ENCODE measurements at regions of chr6 and their contacts with region 1.

Region 1: DNA sequence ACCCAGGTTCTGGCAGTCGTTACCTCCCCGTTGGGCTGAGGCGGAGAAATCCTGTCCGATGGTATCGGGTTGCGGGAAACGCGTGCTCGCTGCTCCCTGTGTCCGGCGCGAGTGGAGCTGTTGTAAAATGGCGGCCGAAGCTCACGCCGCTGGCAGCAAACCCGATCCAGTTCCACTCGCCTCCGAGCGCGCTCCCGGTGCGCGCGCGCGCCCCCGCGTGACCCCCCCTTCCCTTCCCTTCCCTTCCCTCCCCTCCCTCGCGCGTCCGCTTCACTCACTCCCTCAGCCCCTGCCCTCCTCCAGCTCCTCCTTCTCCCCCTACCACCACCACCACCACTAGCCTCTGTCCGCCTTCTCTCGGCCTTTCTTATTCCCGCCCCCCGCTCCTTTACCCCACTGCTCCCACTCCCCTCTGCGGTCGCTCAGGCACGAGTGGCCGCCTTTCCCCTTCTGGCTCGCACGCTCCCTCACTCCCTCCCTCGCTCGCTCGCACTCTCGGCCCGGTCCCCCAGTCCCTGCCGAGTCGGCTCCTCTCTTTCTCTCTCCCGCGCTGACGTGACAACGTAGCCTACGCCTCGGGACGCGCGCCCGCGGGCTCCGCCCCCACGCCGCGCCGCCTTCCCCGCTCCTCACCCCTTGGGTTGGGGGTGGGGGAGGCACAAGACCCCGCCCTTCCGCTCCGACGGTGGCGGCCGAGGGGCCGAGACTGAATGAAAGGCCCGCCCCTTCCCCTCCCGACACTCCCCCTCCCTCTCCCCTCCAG is at the start of gene SYNCRIP:
- DNase-seq: peak; percentile 98
- H3K4me3 Mint-ChIP-seq: peak within 1 kb of the TSS; percentile 84
- H3K27ac Mint-ChIP-seq: peak within 1 kb of the TSS; percentile 99
- H3K4me1 Mint-ChIP-seq: peaks cover 37% of the 10 kb centered on the region
- H3K27me3 Mint-ChIP-seq: no peaks in the 10 kb centered on the region
- total RNA-seq, gene SYNCRIP: 106 to 109 TPM

Region 2: GRCh38 chr6:84227434-84228197 is 1415.3 kb before region 1 on chr6 and contains the start of gene CEP162:
- CTCF ChIA-PET with region 1: no interaction called
- intact Hi-C with region 1: loop called (anchors 5 kb)
- DNase-seq: peak; percentile 91
- H3K4me3 Mint-ChIP-seq: peak within 1 kb of the TSS; percentile 99
- H3K27ac Mint-ChIP-seq: peak within 1 kb of the TSS; percentile 93
- H3K4me1 Mint-ChIP-seq: peaks cover 11% of the 10 kb centered on the region
- H3K27me3 Mint-ChIP-seq: peaks cover 5% of the 10 kb centered on the region
- total RNA-seq, gene CEP162: 4.4 to 5.0 TPM

Region 3: GRCh38 chr6:85314586-85314985 is 328.4 kb before region 1 on chr6:
- CTCF ChIA-PET with region 1: no interaction called
- intact Hi-C with region 1: no loop called
- DNase-seq: no peak
- H3K4me3 Mint-ChIP-seq: no peak overlapping the region
- H3K27ac Mint-ChIP-seq: no peak overlapping the region
- H3K4me1 Mint-ChIP-seq: no peaks in the 10 kb centered on the region
- H3K27me3 Mint-ChIP-seq: peaks cover 2% of the 10 kb centered on the region

Region 4: GRCh38 chr6:85516168-85516567 is 126.8 kb before region 1 on chr6:
- CTCF ChIA-PET with region 1: no interaction called
- intact Hi-C with region 1: no loop called
- DNase-seq: no peak
- H3K4me3 Mint-ChIP-seq: no peak overlapping the region
- H3K27ac Mint-ChIP-seq: no peak overlapping the region
- H3K4me1 Mint-ChIP-seq: no peaks in the 10 kb centered on the region
- H3K27me3 Mint-ChIP-seq: no peaks in the 10 kb centered on the region

Region 5: GRCh38 chr6:85600713-85601313 is 42.1 kb before region 1 on chr6:
- CTCF ChIA-PET with region 1: no interaction called
- intact Hi-C with region 1: loop called (anchors 5 kb)
- DNase-seq: no peak
- H3K4me3 Mint-ChIP-seq: no peak overlapping the region
- H3K27ac Mint-ChIP-seq: peak overlapping the region; percentile 48
- H3K4me1 Mint-ChIP-seq: no peaks in the 10 kb centered on the region
- H3K27me3 Mint-ChIP-seq: no peaks in the 10 kb centered on the region

Region 6: GRCh38 chr6:85669735-85670194 is 26.8 kb after region 1 on chr6:
- CTCF ChIA-PET with region 1: interaction called, 14 read pairs
- intact Hi-C with region 1: loop called (anchors 1 kb)
- DNase-seq: peak; percentile 55
- H3K4me3 Mint-ChIP-seq: peak overlapping the region; percentile 52
- H3K27ac Mint-ChIP-seq: peak overlapping the region; percentile 87
- H3K4me1 Mint-ChIP-seq: peaks cover 50% of the 10 kb centered on the region
- H3K27me3 Mint-ChIP-seq: no peaks in the 10 kb centered on the region

Measured in activated naive CD4-positive, alpha-beta T cell treated with anti-CD3 and anti-CD28 coated beads for 36 hours (primary cell).